ENCODE measurements at regions of chr17 and their contacts with region 1.

Region 1: GRCh38 chr17:83119987-83120864 is 40.8 kb downstream of the METRNL start:
- DNase-seq: peak; percentile 98
- H3K4me3 ChIP-seq: peak overlapping the region; percentile 62
- H3K27ac ChIP-seq: peak overlapping the region; percentile 89
- H3K4me1 ChIP-seq: peaks cover 30% of the 10 kb centered on the region
- CTCF ChIP-seq: no peak

Region 2: DNA sequence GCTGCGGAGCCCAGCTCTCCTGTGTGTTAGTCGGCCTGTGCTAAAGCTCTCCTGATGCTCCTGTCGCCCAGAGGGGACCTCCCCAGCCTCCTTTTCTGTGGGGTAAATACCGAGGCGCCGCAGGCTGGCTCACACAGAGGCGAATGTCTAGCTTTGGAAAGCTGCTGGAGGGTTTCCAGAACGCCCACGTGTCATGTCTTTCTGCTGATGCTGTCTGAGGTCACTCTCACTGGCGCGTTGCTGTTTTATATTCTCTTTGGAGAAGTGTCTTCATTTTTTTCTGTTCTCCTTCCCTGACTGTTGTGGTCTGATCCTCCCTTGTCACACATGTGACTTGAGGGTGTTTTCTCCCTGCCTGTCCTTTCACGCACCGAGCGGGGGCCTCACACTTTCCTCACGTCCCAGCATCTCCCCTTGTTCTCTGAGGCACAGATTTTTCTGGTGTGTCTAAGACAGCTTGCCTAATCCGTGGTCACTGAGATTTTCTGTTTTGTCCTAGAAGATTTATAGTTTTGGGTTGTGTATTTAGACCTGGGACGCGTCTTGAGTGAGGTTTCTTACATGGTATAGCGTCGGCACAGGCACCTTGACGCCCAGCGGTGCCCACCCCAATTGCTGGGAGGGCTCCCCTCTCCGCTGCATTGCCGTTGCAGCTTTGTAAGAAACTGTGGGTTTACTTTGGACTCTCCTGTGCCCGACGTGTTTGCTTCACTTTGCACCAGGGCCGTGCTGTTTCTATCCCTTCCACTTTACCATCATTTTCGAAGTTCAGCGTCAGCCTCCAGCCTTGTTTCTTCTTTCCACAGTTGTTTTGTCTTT is 188.3 kb before region 1 on chr17:
- CTCF ChIA-PET with region 1: no interaction called
- POLR2A ChIA-PET with region 1: no interaction called
- intact Hi-C with region 1: no loop called
- DNase-seq: no peak
- H3K4me3 ChIP-seq: no peak overlapping the region
- H3K27ac ChIP-seq: no peak overlapping the region
- H3K4me1 ChIP-seq: no peaks in the 10 kb centered on the region
- CTCF ChIP-seq: no peak

Region 3: DNA sequence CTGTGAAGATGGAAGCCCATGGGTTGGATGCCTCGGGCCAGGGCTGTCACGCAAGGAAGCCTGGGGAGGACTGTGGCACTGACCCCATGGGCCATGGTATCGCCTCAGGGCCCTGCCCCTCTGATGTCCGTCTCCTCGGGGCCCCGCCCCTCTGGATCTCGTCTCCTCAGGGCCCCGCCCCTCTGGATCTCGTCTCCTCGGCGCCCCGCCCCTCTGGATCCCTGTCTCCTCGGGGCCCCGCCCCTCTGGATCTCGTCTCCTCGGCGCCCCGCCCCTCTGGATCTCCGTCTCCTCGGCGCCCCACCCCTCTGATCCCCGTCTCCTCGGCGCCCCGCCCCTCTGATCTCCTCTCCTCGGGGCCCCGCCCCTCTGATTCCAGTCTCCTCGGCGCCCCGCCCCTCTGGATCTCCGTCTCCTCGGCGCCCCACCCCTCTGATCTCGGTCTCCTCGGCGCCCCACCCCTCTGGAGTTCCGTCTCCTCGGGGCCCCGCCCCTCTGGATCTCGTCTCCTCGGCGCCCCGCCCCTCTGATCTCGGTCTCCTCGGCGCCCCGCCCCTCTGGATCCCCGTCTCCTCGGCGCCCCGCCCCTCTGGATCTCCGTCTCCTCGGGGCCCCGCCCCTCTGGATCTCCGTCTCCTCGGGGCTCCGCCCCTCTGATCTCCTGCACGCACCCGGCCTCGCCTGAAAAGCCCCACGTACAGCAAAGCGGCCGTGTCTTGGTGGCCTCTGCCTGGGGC is 16.8 kb before region 1 on chr17:
- CTCF ChIA-PET with region 1: no interaction called
- POLR2A ChIA-PET with region 1: no interaction called
- intact Hi-C with region 1: loop called (anchors 2 kb)
- DNase-seq: peak; percentile 30
- H3K4me3 ChIP-seq: no peak overlapping the region
- H3K27ac ChIP-seq: no peak overlapping the region
- H3K4me1 ChIP-seq: peaks cover 43% of the 10 kb centered on the region
- CTCF ChIP-seq: no peak

Region 4: GRCh38 chr17:83174285-83175118 is 54.3 kb after region 1 on chr17:
- CTCF ChIA-PET with region 1: interaction called, 4 read pairs
- POLR2A ChIA-PET with region 1: interaction called, 4 read pairs
- intact Hi-C with region 1: loop called (anchors 1 kb)
- DNase-seq: peak; percentile 90
- H3K4me3 ChIP-seq: peak overlapping the region; percentile 3
- H3K27ac ChIP-seq: peak overlapping the region; percentile 41
- H3K4me1 ChIP-seq: peaks cover 25% of the 10 kb centered on the region
- CTCF ChIP-seq: peak; percentile 75